Activated B cell treated with CpG ODN at 0.5 μM for 24 hours (primary cell): ENCODE measurements at regions of chr10 and their contacts with region 1.

Region 1: DNA sequence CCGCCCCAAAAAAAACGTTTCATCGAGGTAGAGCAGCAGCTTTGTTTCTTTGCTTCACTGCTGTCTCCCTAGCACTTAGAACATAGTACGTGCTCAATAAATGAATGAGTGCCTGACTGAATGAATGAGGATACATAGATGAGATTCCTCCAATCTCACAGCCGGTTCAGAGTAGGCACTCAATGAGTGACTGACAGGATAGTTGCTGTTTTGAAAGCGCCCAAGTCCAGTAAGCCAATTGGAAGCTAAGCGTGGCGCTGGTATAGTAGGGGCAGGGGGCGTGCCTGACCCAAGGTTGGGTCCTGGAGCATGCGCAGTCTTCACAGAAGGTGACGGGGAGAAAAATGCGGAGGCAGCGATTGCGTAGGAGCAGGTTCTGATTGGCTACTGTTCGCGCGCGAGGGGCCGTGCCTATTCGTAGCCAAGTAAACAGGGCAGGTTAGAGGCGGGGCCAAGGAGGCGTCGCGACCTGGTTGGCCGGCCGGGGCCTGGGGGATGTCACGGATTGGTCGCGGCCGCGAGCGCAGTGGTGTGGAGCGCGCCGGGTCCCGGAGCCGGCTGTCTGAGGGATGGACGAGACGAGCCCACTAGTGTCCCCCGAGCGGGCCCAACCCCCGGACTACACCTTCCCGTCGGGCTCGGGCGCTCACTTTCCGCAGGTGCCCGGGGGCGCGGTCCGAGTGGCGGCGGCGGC is at the start of gene PI4K2A:
- DNase-seq: peak; percentile 92
- ATAC-seq: peak; percentile 96
- H3K4me3 Mint-ChIP-seq: peak within 1 kb of the TSS; percentile 97
- H3K27ac Mint-ChIP-seq: peak within 1 kb of the TSS; percentile 90
- H3K4me1 Mint-ChIP-seq: peaks cover 23% of the 10 kb centered on the region
- H3K27me3 Mint-ChIP-seq: no peaks in the 10 kb centered on the region
- CTCF ChIP-seq: no peak
- total RNA-seq, gene PI4K2A: 15.0 and 15.1 TPM in 2 replicates

Region 2: GRCh38 chr10:97425964-97426775 is 214.2 kb before region 1 on chr10 and contains the start of gene PGAM1:
- CTCF ChIA-PET with region 1: no interaction called
- POLR2A ChIA-PET with region 1: no interaction called
- intact Hi-C with region 1: loop called (anchors 1 kb)
- DNase-seq: peak; percentile 97
- ATAC-seq: peak; percentile 88
- H3K4me3 Mint-ChIP-seq: peak within 1 kb of the TSS; percentile 92
- H3K27ac Mint-ChIP-seq: peak within 1 kb of the TSS; percentile 94
- H3K4me1 Mint-ChIP-seq: peaks cover 43% of the 10 kb centered on the region
- H3K27me3 Mint-ChIP-seq: no peaks in the 10 kb centered on the region
- CTCF ChIP-seq: no peak
- total RNA-seq, gene PGAM1: 162 and 166 TPM in 2 replicates

Region 3: DNA sequence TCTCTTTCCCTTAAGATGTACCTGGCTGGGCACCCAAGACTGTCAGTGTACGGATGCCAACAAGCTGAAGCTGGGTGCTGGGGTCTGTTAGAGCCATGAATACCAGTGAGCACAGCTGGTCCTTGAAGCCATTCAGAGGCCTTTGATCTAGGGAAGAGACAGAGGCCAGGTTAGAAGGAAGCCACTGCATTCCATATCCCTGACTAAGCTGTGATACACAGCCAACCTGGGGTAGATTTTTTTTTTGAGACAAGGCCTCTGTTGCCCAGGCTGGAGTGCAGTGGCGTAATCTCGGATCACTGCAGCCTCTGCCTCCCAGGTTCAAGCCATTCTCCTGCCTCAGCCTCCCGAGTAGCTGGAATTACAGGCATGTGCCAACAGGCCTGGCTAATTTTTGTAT is 173.6 kb before region 1 on chr10:
- CTCF ChIA-PET with region 1: no interaction called
- POLR2A ChIA-PET with region 1: no interaction called
- intact Hi-C with region 1: no loop called
- DNase-seq: no peak
- ATAC-seq: no peak
- H3K4me3 Mint-ChIP-seq: no peak overlapping the region
- H3K27ac Mint-ChIP-seq: no peak overlapping the region
- H3K4me1 Mint-ChIP-seq: no peaks in the 10 kb centered on the region
- H3K27me3 Mint-ChIP-seq: no peaks in the 10 kb centered on the region
- CTCF ChIP-seq: no peak

Region 4: DNA sequence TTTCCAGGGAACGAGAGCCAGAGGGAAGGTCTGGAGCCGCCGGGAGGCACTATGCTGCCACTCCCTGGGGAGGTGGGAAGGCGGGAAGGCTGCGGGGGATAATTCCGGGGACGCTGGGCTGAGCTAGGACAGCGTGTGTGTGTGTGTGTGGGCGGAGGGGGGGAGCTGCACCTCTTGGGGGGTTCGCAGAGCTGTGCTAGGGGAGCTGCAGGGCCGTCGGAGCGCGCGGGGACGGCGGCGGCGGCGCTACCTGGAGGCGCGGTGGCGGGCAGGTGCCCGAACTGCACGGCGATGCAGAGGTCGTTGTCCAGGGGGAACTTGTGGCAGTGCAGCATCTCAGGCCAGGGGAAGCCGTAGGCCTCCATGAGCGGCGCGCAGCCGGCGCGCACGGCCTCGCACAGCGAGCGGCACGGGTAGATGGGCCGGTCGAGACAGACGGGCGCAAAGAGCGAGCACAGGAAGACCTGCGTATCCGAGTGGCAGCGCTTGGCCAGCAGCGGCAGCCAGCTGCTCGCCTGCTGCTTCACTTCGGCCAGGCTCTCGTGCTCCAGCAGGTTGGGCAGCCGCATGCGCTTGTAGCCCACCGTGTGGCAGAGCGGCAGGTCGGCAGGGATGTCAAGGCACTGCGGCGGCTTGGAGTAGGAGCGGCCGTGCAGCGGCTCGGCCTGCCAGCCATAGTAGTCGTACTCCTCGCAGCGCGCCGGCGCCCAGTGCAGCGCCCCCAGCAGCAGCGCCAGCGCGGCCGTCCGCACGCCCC is 130.9 kb after region 1 on chr10:
- CTCF ChIA-PET with region 1: no interaction called
- POLR2A ChIA-PET with region 1: no interaction called
- intact Hi-C with region 1: no loop called
- DNase-seq: no peak
- ATAC-seq: no peak
- H3K4me3 Mint-ChIP-seq: no peak overlapping the region
- H3K27ac Mint-ChIP-seq: no peak overlapping the region
- H3K4me1 Mint-ChIP-seq: peaks cover 15% of the 10 kb centered on the region
- H3K27me3 Mint-ChIP-seq: peaks cover 38% of the 10 kb centered on the region
- CTCF ChIP-seq: no peak

Region 5: GRCh38 chr10:98134431-98135221 is 494.3 kb after region 1 on chr10 and contains the start of gene R3HCC1L:
- CTCF ChIA-PET with region 1: no interaction called
- POLR2A ChIA-PET with region 1: interaction called, 4 read pairs
- intact Hi-C with region 1: loop called (anchors 10 kb)
- DNase-seq: peak; percentile 93
- ATAC-seq: peak; percentile 91
- H3K4me3 Mint-ChIP-seq: peak within 1 kb of the TSS; percentile 94
- H3K27ac Mint-ChIP-seq: peak within 1 kb of the TSS; percentile 97
- H3K4me1 Mint-ChIP-seq: peaks cover 63% of the 10 kb centered on the region
- H3K27me3 Mint-ChIP-seq: no peaks in the 10 kb centered on the region
- CTCF ChIP-seq: no peak
- total RNA-seq, gene R3HCC1L: 24.4 and 24.9 TPM in 2 replicates